Activated CD4-positive, alpha-beta memory T cell treated with anti-CD3 and anti-CD28 coated beads for 36 hours (primary cell): ENCODE measurements at regions of chrX and their contacts with region 1.

Region 1: GRCh38 chrX:150575416-150575808 is 7.0 kb downstream of the MTM1 start:
- DNase-seq: peak; percentile 85
- H3K4me3 Mint-ChIP-seq: peak overlapping the region; percentile 68
- H3K27ac Mint-ChIP-seq: peak overlapping the region; percentile 97
- H3K4me1 Mint-ChIP-seq: peaks cover 85% of the 10 kb centered on the region
- H3K27me3 Mint-ChIP-seq: no peaks in the 10 kb centered on the region

Region 2: GRCh38 chrX:150365051-150365989 is 210.1 kb before region 1 on chrX:
- CTCF ChIA-PET with region 1: interaction called, 4 read pairs
- POLR2A ChIA-PET with region 1: interaction called, 5 read pairs
- intact Hi-C with region 1: loop called (anchors 2 kb)
- DNase-seq: peak; percentile 76
- H3K4me3 Mint-ChIP-seq: peak overlapping the region; percentile 78
- H3K27ac Mint-ChIP-seq: peak overlapping the region; percentile 64
- H3K4me1 Mint-ChIP-seq: peaks cover 18% of the 10 kb centered on the region
- H3K27me3 Mint-ChIP-seq: peaks cover 5% of the 10 kb centered on the region

Region 3: DNA sequence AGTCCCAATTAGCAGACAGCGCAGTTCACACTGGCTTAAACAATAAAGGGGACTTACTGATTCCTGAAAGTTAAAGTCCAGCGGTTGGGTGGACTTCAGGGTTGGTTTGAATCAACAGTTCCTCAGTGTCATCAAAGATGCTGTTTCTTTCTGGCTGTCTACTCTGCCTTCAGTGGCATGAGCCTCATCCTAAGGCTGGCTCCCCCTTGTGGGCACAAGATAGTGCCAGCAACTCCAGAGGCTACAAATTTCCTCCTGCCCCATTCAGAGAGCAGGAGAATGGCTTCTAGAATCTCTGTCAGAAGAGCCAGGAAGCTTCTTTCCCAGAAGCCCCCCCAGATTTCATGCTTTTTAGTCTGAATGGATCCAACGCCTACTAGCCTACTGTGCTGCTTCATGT is 89.4 kb before region 1 on chrX:
- CTCF ChIA-PET with region 1: no interaction called
- POLR2A ChIA-PET with region 1: interaction called, 21 read pairs
- intact Hi-C with region 1: loop called (anchors 1 kb)
- DNase-seq: peak; percentile 52
- H3K4me3 Mint-ChIP-seq: no peak overlapping the region
- H3K27ac Mint-ChIP-seq: no peak overlapping the region
- H3K4me1 Mint-ChIP-seq: peaks cover 27% of the 10 kb centered on the region
- H3K27me3 Mint-ChIP-seq: no peaks in the 10 kb centered on the region

Region 4: GRCh38 chrX:150879855-150880808 is 304.7 kb after region 1 on chrX:
- CTCF ChIA-PET with region 1: no interaction called
- POLR2A ChIA-PET with region 1: no interaction called
- intact Hi-C with region 1: loop called (anchors 10 kb)
- DNase-seq: no peak
- H3K4me3 Mint-ChIP-seq: no peak overlapping the region
- H3K27ac Mint-ChIP-seq: peak overlapping the region; percentile 82
- H3K4me1 Mint-ChIP-seq: peaks cover 34% of the 10 kb centered on the region
- H3K27me3 Mint-ChIP-seq: no peaks in the 10 kb centered on the region